Endothelial cell of umbilical vein (primary cell): ENCODE measurements at regions of chr15 and their contacts with region 1.

Region 1: GRCh38 chr15:35751413-35752133 is 205.6 kb upstream of the DPH6 start:
- DNase-seq: peak; percentile 85
- H3K4me3 ChIP-seq: no peak overlapping the region
- H3K27ac ChIP-seq: no peak overlapping the region
- H3K4me1 ChIP-seq: peaks cover 3% of the 10 kb centered on the region
- H3K27me3 ChIP-seq: no peaks in the 10 kb centered on the region
- CTCF ChIP-seq: peak; percentile 73 to 77
- POLR2A ChIP-seq: no peak

Region 2: DNA sequence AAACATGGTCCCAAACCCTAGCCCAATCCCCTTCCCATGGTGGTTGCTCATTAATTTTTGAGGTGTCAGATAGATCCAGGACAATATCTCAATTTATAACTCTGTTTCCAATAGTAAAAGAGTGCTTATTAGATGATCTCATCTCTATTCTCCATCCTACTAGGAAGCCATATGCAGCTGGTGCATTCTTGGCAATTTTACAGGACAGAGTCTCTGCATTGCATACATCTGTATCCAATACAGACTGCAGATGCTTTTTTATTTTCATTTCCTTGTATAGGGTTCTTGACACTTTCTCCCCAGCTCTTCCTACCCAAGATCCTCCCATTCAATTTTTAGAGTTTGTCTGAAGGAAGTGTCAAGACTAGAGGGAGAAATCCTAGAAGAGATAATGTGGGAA is 10.8 kb before region 1 on chr15:
- CTCF ChIA-PET with region 1: interaction called, 17 read pairs
- POLR2A ChIA-PET with region 1: no interaction called
- dilution Hi-C with region 1: no loop called
- intact Hi-C with region 1: no loop called
- DNase-seq: peak; percentile 36
- H3K4me3 ChIP-seq: no peak overlapping the region
- H3K27ac ChIP-seq: no peak overlapping the region
- H3K4me1 ChIP-seq: peaks cover 31% of the 10 kb centered on the region
- H3K27me3 ChIP-seq: no peaks in the 10 kb centered on the region
- CTCF ChIP-seq: no peak
- POLR2A ChIP-seq: no peak

Region 3: GRCh38 chr15:35912196-35912595 is 160.6 kb after region 1 on chr15:
- CTCF ChIA-PET with region 1: interaction called, 26 read pairs
- POLR2A ChIA-PET with region 1: no interaction called
- dilution Hi-C with region 1: no loop called
- intact Hi-C with region 1: loop called (anchors 5 kb)
- DNase-seq: peak; percentile 31
- H3K4me3 ChIP-seq: no peak overlapping the region
- H3K27ac ChIP-seq: no peak overlapping the region
- H3K4me1 ChIP-seq: no peaks in the 10 kb centered on the region
- H3K27me3 ChIP-seq: peaks cover 0 to 2% of the 10 kb centered on the region in 2 experiments
- CTCF ChIP-seq: peak in 1 of 2 donors; percentile 8
- POLR2A ChIP-seq: no peak

Region 4: GRCh38 chr15:36501063-36501678 is 749.6 kb after region 1 on chr15:
- CTCF ChIA-PET with region 1: interaction called, 11 read pairs
- POLR2A ChIA-PET with region 1: no interaction called
- dilution Hi-C with region 1: no loop called
- intact Hi-C with region 1: loop called (anchors 1 kb)
- DNase-seq: peak; percentile 69
- H3K4me3 ChIP-seq: no peak overlapping the region
- H3K27ac ChIP-seq: no peak overlapping the region
- H3K4me1 ChIP-seq: peaks cover 4% of the 10 kb centered on the region
- H3K27me3 ChIP-seq: no peaks in the 10 kb centered on the region
- CTCF ChIP-seq: peak; percentile 55 to 64
- POLR2A ChIP-seq: no peak

Region 5: GRCh38 chr15:37079726-37080125 is 1328.2 kb after region 1 on chr15:
- CTCF ChIA-PET with region 1: no interaction called
- POLR2A ChIA-PET with region 1: no interaction called
- dilution Hi-C with region 1: no loop called
- intact Hi-C with region 1: no loop called
- DNase-seq: no peak
- H3K4me3 ChIP-seq: no peak overlapping the region
- H3K27ac ChIP-seq: no peak overlapping the region
- H3K4me1 ChIP-seq: peaks cover 14% of the 10 kb centered on the region
- H3K27me3 ChIP-seq: no peaks in the 10 kb centered on the region
- CTCF ChIP-seq: no peak
- POLR2A ChIP-seq: no peak

Region 6: GRCh38 chr15:37134699-37135131 is 1383.1 kb after region 1 on chr15:
- CTCF ChIA-PET with region 1: interaction called, 15 read pairs
- POLR2A ChIA-PET with region 1: no interaction called
- dilution Hi-C with region 1: no loop called
- intact Hi-C with region 1: loop called (anchors 1 kb)
- DNase-seq: peak; percentile 53
- H3K4me3 ChIP-seq: no peak overlapping the region
- H3K27ac ChIP-seq: no peak overlapping the region
- H3K4me1 ChIP-seq: no peaks in the 10 kb centered on the region
- H3K27me3 ChIP-seq: peaks cover 18 to 33% of the 10 kb centered on the region in 2 experiments
- CTCF ChIP-seq: peak; percentile 42 to 54
- POLR2A ChIP-seq: no peak